Dendritic cell treated with granulocyte-macrophage colony-stimulating factor and Interleukin-4, amounts not matched to agents 40 ng/mL and 50 ng/mL, for 4 days (primary cell): ENCODE measurements at regions of chr7 and their contacts with region 1.

Region 1: DNA sequence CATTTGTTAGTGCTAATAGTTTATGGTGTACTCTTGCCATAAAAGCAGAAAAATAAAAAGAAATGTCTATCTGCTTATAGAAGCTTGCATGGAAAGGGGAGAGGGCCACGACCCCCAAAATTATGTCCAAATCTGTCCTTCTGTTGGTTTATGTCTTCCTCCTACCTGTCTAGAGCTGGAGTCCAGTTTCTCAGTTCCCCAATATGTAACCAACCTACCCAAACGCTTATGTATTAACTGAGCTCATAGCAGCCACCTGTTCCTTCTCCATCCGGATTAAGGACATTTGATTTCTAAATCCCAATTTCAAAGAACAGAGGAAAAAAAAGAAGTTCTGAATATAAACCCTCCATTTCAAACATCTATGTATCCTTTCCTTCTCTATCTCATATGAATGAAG is 30.3 kb upstream of the TPK1 start:
- H3K4me3 Mint-ChIP-seq: no peak overlapping the region
- H3K27ac Mint-ChIP-seq: no peak overlapping the region
- H3K4me1 Mint-ChIP-seq: no peaks in the 10 kb centered on the region
- H3K27me3 Mint-ChIP-seq: no peaks in the 10 kb centered on the region

Region 2: DNA sequence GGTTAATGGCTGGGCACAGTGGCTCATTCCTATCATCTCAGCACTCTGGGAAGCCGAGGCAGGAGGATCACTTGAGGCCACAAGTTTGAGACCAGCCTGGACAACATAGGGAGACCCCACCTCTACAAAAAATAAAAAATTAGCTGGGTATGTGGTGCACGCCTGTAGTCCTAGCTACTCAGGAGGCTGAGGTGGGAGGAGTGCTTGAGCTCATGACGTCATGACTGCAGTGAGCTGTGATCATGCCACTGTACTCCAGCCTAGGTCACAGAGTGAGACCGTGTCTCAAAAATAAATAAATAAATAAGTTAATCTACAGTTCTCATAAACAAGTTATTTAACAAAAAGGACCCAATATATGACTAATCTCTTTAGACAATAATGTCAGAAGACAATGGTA is 106.5 kb before region 1 on chr7:
- intact Hi-C with region 1: loop called (anchors 10 kb)
- H3K4me3 Mint-ChIP-seq: no peak overlapping the region
- H3K27ac Mint-ChIP-seq: no peak overlapping the region
- H3K4me1 Mint-ChIP-seq: no peaks in the 10 kb centered on the region
- H3K27me3 Mint-ChIP-seq: no peaks in the 10 kb centered on the region